ENCODE measurements at regions of chr6 and their contacts with region 1.

Region 1: GRCh38 chr6:34757687-34758274 is 476 bp downstream of the SNRPC start:
- DNase-seq: no peak
- H3K4me3 ChIP-seq: peak overlapping the region; percentile 91
- H3K4me3 Mint-ChIP-seq: no peak overlapping the region
- H3K27ac Mint-ChIP-seq: no peak overlapping the region
- H3K4me1 ChIP-seq: peaks cover 5% of the 10 kb centered on the region; the same call in 1 of the 2 replicates
- H3K4me1 Mint-ChIP-seq: peaks cover 7% of the 10 kb centered on the region
- H3K27me3 ChIP-seq: no peaks in the 10 kb centered on the region
- H3K27me3 Mint-ChIP-seq: no peaks in the 10 kb centered on the region
- CTCF ChIP-seq: no peak

Region 2: GRCh38 chr6:34723203-34723602 is 34.6 kb before region 1 on chr6:
- CTCF ChIA-PET with region 1: no interaction called
- POLR2A ChIA-PET with region 1: no interaction called
- intact Hi-C with region 1: loop called (anchors 2 kb)
- DNase-seq: no peak
- H3K4me3 ChIP-seq: no peak overlapping the region
- H3K4me3 Mint-ChIP-seq: no peak overlapping the region
- H3K27ac Mint-ChIP-seq: peak overlapping the region; percentile 58
- H3K4me1 ChIP-seq: peaks cover 29% of the 10 kb centered on the region
- H3K4me1 Mint-ChIP-seq: peaks cover 17% of the 10 kb centered on the region
- H3K27me3 ChIP-seq: no peaks in the 10 kb centered on the region
- H3K27me3 Mint-ChIP-seq: no peaks in the 10 kb centered on the region
- CTCF ChIP-seq: no peak

Region 3: DNA sequence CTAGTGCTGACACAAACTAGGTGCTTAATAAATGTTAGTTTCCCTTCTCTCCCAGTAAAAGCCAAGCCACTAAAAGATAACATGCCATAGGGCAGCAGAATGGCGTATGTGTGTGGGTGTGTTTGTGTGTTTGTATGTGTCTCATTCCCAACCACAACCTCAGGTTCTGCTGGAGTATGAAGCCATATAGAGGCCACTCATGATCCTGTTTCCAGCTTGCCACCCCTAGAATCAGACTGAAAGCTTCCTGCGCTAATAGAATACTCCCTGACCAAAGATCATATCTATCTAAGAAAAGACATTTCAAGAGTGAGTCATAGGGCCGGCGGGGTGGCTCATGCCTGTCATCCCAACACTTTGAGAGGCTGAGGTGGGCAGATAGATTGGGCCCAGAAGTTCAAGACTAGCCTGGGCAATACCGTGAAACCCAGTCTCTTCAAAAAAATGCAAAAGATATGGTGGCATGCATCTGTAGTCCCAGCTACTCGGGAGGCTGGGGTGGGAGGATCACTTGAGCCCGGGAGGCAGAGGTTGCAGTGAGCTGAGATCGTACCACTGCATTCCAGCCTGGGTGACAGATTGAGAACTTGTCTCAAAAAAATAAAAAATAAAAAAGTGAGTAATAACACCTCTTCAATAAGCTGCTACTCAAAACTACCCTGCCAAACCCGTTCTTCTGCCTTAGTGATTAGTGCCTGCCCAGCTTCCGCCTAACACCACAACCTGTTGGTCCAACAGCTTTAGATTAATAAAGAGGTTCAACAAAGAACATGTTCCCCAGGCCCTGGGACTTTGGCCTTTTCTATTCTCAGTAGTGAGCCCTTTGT is 12.3 kb before region 1 on chr6:
- CTCF ChIA-PET with region 1: interaction called, 3 read pairs
- POLR2A ChIA-PET with region 1: interaction called, 12 read pairs
- intact Hi-C with region 1: no loop called
- DNase-seq: peak; percentile 81 to 83
- H3K4me3 ChIP-seq: no peak overlapping the region
- H3K4me3 Mint-ChIP-seq: peak overlapping the region; percentile 44
- H3K27ac Mint-ChIP-seq: peak overlapping the region; percentile 88
- H3K4me1 ChIP-seq: peaks cover 32% of the 10 kb centered on the region
- H3K4me1 Mint-ChIP-seq: peaks cover 24% of the 10 kb centered on the region
- H3K27me3 ChIP-seq: no peaks in the 10 kb centered on the region
- H3K27me3 Mint-ChIP-seq: no peaks in the 10 kb centered on the region
- CTCF ChIP-seq: no peak

Region 4: GRCh38 chr6:34771727-34772126 is 13.9 kb after region 1 on chr6:
- CTCF ChIA-PET with region 1: no interaction called
- POLR2A ChIA-PET with region 1: no interaction called
- intact Hi-C with region 1: no loop called
- DNase-seq: no peak
- H3K4me3 ChIP-seq: no peak overlapping the region
- H3K4me3 Mint-ChIP-seq: no peak overlapping the region
- H3K27ac Mint-ChIP-seq: no peak overlapping the region
- H3K4me1 ChIP-seq: no peaks in the 10 kb centered on the region
- H3K4me1 Mint-ChIP-seq: no peaks in the 10 kb centered on the region
- H3K27me3 ChIP-seq: no peaks in the 10 kb centered on the region
- H3K27me3 Mint-ChIP-seq: no peaks in the 10 kb centered on the region
- CTCF ChIP-seq: no peak

Region 5: GRCh38 chr6:34791701-34792235 is 34.0 kb after region 1 on chr6 and contains the start of gene BLTP3A:
- CTCF ChIA-PET with region 1: interaction called, 3 read pairs
- POLR2A ChIA-PET with region 1: interaction called, 11 read pairs
- intact Hi-C with region 1: loop called (anchors 5 kb)
- DNase-seq: peak; percentile 66 to 85
- H3K4me3 ChIP-seq: peak within 1 kb of the TSS; percentile 88
- H3K4me3 Mint-ChIP-seq: peak within 1 kb of the TSS; percentile 97
- H3K27ac Mint-ChIP-seq: peak within 1 kb of the TSS; percentile 99
- H3K4me1 ChIP-seq: peaks cover 24% of the 10 kb centered on the region
- H3K4me1 Mint-ChIP-seq: peaks cover 9% of the 10 kb centered on the region
- H3K27me3 ChIP-seq: no peaks in the 10 kb centered on the region
- H3K27me3 Mint-ChIP-seq: no peaks in the 10 kb centered on the region
- CTCF ChIP-seq: no peak
- total RNA-seq, gene BLTP3A: 40.3 and 41.6 TPM in 2 replicates

Region 6: GRCh38 chr6:35034411-35035191 is 276.8 kb after region 1 on chr6:
- CTCF ChIA-PET with region 1: no interaction called
- POLR2A ChIA-PET with region 1: no interaction called
- intact Hi-C with region 1: no loop called
- DNase-seq: no peak
- H3K4me3 ChIP-seq: no peak overlapping the region
- H3K4me3 Mint-ChIP-seq: no peak overlapping the region
- H3K27ac Mint-ChIP-seq: no peak overlapping the region
- H3K4me1 ChIP-seq: peaks cover 11% of the 10 kb centered on the region
- H3K4me1 Mint-ChIP-seq: peaks cover 21% of the 10 kb centered on the region
- H3K27me3 ChIP-seq: no peaks in the 10 kb centered on the region
- H3K27me3 Mint-ChIP-seq: no peaks in the 10 kb centered on the region
- CTCF ChIP-seq: no peak

Measured in Caco-2 (cell line).